Activated B cell treated with CpG ODN at 0.5 μM for 24 hours (primary cell): ENCODE measurements at regions of chr17 and their contacts with region 1.

Region 1: GRCh38 chr17:40113110-40113906 is 8.5 kb upstream of the MSL1 start:
- DNase-seq: peak; percentile 80
- ATAC-seq: peak; percentile 87
- H3K4me3 Mint-ChIP-seq: peak overlapping the region; percentile 89
- H3K27ac Mint-ChIP-seq: peak overlapping the region; percentile 88
- H3K4me1 Mint-ChIP-seq: peaks cover 54% of the 10 kb centered on the region
- H3K27me3 Mint-ChIP-seq: no peaks in the 10 kb centered on the region
- CTCF ChIP-seq: no peak

Region 2: DNA sequence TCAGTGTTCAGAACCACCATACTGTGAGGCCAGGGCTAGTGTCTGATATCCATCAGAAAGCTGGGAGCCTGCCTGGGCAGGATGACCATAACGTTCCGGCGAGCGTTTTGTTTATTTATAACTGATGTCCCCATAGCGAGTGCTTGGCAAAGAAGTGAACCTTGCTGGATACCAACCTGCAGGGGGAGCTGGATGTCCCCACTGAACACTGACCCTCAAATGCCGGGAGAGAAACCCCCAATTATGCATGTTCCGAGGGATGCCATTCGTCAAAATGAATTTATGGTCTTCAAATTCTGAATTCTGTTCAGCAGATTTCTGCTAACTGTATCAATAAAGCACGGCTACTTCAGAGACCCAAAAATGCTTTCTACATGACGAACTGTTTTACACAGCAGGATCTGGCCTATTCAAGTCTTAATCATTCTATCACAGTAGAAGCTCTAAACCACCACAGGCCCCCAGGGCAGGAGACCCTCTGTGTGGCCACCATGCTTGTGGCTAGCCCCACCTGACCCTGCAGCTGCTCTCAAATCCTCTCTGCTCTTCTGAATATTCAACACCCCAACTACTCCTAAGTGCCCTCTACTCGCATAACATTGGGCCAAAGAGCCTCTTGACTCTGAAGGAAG is 74.3 kb before region 1 on chr17:
- CTCF ChIA-PET with region 1: interaction called, 15 read pairs
- POLR2A ChIA-PET with region 1: no interaction called
- intact Hi-C with region 1: loop called (anchors 2 kb)
- DNase-seq: no peak
- ATAC-seq: no peak
- H3K4me3 Mint-ChIP-seq: no peak overlapping the region
- H3K27ac Mint-ChIP-seq: no peak overlapping the region
- H3K4me1 Mint-ChIP-seq: no peaks in the 10 kb centered on the region
- H3K27me3 Mint-ChIP-seq: no peaks in the 10 kb centered on the region
- CTCF ChIP-seq: no peak

Region 3: DNA sequence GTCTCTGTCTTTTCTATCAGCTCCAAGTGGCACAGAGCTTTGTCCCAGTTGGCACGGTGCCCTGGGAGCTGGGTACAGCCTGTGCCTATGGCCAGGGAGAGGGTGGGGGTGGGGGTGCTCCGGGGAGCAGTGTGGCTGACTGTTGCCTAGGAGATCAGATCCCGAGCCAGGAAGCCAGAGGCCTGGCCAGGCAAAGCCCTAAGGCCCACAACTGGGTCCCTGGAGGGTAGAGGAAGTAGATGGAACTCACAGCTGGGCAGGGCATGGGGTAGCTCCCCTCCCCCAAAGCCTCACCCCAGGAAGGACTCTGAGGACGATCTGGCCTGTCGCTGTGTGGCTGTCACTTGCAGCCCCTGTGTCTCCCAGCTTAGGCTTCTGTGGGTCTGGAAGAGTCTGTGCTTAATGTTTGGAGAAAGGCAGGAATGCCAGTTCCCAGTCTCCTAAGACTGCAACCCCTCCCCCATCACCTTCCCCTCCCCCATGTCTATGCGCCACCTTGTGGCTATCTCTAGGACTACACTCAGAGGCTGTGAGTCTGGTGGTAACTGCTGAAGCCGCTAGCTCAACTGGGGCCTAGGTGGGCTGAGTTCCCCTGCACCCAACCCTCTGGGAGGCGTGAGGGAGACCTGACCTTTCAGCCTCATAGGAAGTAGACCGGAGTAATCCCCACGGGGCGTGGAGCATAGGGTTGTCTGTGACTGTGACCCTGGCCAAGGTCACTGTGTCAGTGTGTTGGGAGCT is 37.9 kb before region 1 on chr17:
- CTCF ChIA-PET with region 1: interaction called, 53 read pairs
- POLR2A ChIA-PET with region 1: interaction called, 20 read pairs
- intact Hi-C with region 1: loop called (anchors 1 kb)
- DNase-seq: peak; percentile 52
- ATAC-seq: peak; percentile 96
- H3K4me3 Mint-ChIP-seq: no peak overlapping the region
- H3K27ac Mint-ChIP-seq: peak overlapping the region; percentile 16
- H3K4me1 Mint-ChIP-seq: peaks cover 29% of the 10 kb centered on the region
- H3K27me3 Mint-ChIP-seq: no peaks in the 10 kb centered on the region
- CTCF ChIP-seq: peak; percentile 61

Region 4: DNA sequence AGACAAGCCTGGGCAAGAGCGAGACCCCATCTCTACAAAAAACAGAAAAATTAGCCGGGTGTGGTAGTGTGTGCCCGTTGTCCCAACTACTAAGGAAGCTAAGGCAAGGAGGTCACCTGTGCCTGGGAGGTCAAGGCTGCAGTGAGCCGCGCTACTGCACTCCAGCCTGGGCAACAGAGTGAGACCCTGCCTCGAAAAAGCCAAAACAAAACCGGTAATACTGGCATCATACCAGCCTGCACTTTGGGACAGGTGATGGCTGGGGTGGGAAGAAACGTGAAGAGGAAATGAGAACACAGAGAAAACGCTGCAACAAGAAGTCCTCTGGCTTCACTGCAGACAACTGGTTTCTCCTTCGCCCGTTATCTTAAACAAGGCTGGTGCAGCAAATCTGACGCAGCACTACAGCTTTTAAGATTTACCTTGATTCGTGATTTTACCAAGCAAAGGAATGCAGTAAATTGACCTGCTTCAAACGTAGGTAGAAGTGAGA is 26.3 kb after region 1 on chr17:
- CTCF ChIA-PET with region 1: interaction called, 23 read pairs
- POLR2A ChIA-PET with region 1: interaction called, 61 read pairs
- intact Hi-C with region 1: loop called (anchors 1 kb)
- DNase-seq: peak; percentile 20
- ATAC-seq: peak; percentile 19
- H3K4me3 Mint-ChIP-seq: peak overlapping the region; percentile 93
- H3K27ac Mint-ChIP-seq: peak overlapping the region; percentile 92
- H3K4me1 Mint-ChIP-seq: peaks cover 29% of the 10 kb centered on the region
- H3K27me3 Mint-ChIP-seq: no peaks in the 10 kb centered on the region
- CTCF ChIP-seq: no peak

Region 5: GRCh38 chr17:40168262-40168832 is 55.0 kb after region 1 on chr17:
- CTCF ChIA-PET with region 1: interaction called, 116 read pairs
- POLR2A ChIA-PET with region 1: interaction called, 15 read pairs
- intact Hi-C with region 1: loop called (anchors 1 kb)
- DNase-seq: no peak
- ATAC-seq: peak; percentile 85
- H3K4me3 Mint-ChIP-seq: no peak overlapping the region
- H3K27ac Mint-ChIP-seq: no peak overlapping the region
- H3K4me1 Mint-ChIP-seq: no peaks in the 10 kb centered on the region
- H3K27me3 Mint-ChIP-seq: no peaks in the 10 kb centered on the region
- CTCF ChIP-seq: no peak

Region 6: DNA sequence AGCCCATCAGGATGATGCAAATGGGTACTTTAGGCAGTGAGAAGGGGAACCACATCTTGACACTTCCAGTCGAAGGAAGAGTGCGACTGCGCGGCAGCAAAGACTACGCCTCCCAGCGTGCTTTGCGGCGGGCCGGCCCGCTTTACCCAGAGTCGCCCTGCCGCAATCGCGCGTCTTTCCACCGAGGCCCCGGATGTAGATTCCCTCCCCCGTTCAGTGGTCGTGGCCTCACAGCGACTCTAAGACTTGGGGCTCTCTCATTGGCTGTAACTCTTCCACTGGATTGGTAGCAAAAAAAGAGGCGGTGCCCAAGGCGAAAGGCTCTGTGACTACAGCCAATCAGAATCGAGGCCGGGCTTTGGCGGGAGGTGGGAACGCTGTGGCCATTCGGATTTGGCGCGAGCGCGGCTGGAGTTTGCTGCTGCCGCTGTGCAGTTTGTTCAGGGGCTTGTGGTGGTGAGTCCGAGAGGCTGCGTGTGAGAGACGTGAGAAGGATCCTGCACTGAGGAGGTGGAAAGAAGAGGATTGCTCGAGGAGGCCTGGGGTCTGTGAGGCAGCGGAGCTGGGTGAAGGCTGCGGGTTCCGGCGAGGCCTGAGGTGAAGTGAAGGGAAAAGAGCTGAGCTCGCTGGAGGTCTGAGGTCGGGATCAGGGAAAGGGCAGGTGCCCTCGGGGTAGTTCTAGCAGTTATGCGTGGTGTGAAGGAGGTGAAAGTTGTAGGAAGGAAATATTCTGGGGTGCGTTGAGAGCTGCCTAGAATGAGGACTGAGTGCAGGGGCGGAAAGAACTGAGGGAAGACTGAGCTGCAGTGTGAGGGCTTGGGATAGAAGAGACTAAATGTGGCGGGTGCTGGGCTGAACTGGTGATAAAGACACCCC is 174.4 kb after region 1 on chr17 and contains the start of gene CDC6:
- CTCF ChIA-PET with region 1: interaction called, 7 read pairs
- POLR2A ChIA-PET with region 1: interaction called, 4 read pairs
- intact Hi-C with region 1: loop called (anchors 1 kb)
- DNase-seq: peak; percentile 93
- ATAC-seq: peak; percentile 95
- H3K4me3 Mint-ChIP-seq: peak within 1 kb of the TSS; percentile 97
- H3K27ac Mint-ChIP-seq: peak within 1 kb of the TSS; percentile 87
- H3K4me1 Mint-ChIP-seq: peaks cover 18% of the 10 kb centered on the region
- H3K27me3 Mint-ChIP-seq: no peaks in the 10 kb centered on the region
- CTCF ChIP-seq: no peak
- total RNA-seq, gene CDC6: 9.2 and 9.7 TPM in 2 replicates

Region 7: GRCh38 chr17:41008805-41009204 is 895.5 kb after region 1 on chr17 and contains the start of gene KRTAP3-1:
- CTCF ChIA-PET with region 1: no interaction called
- POLR2A ChIA-PET with region 1: no interaction called
- intact Hi-C with region 1: no loop called
- DNase-seq: no peak
- ATAC-seq: no peak
- H3K4me3 Mint-ChIP-seq: no peak within 1 kb of the TSS
- H3K27ac Mint-ChIP-seq: no peak within 1 kb of the TSS
- H3K4me1 Mint-ChIP-seq: no peaks in the 10 kb centered on the region
- H3K27me3 Mint-ChIP-seq: peaks cover 14% of the 10 kb centered on the region
- CTCF ChIP-seq: no peak
- total RNA-seq, gene KRTAP3-1: not detected in 2 replicates